ENCODE measurements at regions of chr10 and their contacts with region 1.

Region 1: GRCh38 chr10:58781873-58782488 is 269.3 kb downstream of the BICC1 start:
- DNase-seq: no peak
- H3K4me3 ChIP-seq: no peak overlapping the region
- H3K27ac ChIP-seq: peak overlapping the region; percentile 69
- H3K4me1 ChIP-seq: peaks cover 26% of the 10 kb centered on the region
- H3K27me3 ChIP-seq: peaks cover 4% of the 10 kb centered on the region
- CTCF ChIP-seq: peak; percentile 72

Region 2: GRCh38 chr10:59227136-59227673 is 445.2 kb after region 1 on chr10:
- intact Hi-C with region 1: loop called (anchors 10 kb)
- DNase-seq: no peak
- H3K4me3 ChIP-seq: no peak overlapping the region
- H3K27ac ChIP-seq: no peak overlapping the region
- H3K4me1 ChIP-seq: no peaks in the 10 kb centered on the region
- H3K27me3 ChIP-seq: no peaks in the 10 kb centered on the region
- CTCF ChIP-seq: no peak

Measured in left ventricle myocardium inferior (tissue), 1 donor.